Posterior vena cava (tissue), 2 donors: ENCODE measurements at regions of chr2 and their contacts with region 1.

Region 1: DNA sequence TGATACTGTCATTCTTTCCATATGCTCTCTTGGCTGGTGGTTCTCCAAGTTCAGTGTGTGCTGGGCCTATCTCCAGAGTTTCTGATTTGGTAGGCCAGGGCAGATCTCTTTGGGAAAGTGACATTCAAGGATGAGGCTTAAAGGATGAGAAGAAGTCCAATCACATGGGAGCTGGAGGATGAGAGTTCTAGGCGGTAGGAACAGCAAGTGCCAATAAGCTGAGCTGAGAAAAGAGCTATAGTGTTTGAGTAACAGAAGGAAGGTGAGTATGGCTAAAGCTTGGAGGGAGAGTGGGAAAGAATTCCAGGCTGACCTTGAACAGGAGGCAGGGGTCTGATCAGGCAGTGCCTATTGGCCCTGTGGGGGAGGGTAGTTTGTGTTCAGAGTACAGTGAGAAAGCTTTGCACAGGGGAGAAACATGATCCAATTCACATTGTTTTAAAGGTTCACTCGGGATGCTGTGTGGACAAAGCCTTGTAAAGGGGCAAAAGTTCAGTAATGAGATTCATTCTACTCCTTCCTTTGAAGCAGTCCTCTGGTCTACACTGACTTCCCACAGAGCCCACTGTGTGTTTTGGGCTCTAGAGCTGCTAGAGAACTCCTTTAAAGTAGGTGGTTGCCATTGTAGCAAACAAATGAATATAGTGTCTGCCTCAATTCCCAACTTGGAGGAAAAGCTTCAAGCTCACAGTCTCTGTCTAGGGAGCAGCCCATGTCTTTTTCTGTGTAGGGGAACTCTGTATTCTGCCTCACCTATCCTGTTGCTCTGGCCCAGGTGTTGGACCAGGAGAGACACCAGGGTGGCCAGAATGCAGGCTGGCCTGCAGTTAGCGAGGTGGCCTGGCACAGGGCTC is 81.8 kb downstream of the FASTKD2 start:
- DNase-seq: no peak

Region 2: GRCh38 chr2:206890926-206891325 is 43.7 kb after region 1 on chr2:
- intact Hi-C with region 1: loop called in 1 of 2 experiments (anchors 1 kb)
- DNase-seq: no peak